Left colon (tissue), 2 donors: ENCODE measurements at regions of chr2 and their contacts with region 1.

Region 1: GRCh38 chr2:113965644-113966043 is 75.8 kb downstream of the ACTR3 start:
- DNase-seq: peak in 1 of 2 donors; percentile 20
- ATAC-seq: peak; percentile 64

Region 2: DNA sequence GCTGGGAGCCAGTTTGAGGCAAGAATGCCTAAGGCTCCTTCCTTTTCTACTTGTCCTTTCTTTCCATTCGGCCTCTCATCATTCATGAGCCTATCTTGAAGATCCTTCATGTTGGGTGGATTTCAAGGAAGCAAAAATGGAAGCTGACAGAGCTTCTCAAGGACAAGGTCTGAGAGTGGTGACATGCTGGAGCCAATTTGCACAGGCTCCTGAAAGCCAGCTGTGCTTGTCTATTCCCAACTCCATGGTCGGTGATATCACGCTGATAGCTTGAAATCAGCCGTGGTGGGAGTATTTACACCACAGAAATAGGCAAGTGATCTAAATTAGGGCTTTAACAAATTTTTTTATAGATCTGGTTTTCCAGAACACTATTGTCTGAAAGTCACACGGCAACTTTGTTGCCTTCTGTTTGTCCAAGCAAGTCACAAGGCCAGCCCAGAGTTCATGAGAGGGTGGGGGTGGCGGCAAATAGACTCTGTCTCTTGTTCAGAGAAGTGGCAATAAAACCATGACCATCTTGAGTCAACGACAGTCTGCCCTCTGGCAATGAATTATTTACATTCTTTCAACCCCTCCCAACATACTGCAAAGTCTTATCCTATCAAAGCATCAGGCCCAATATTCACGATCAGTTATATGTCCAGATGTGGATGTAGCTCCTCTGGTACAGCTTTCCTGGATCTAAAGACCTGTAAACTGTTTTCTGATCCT is 159.3 kb before region 1 on chr2:
- intact Hi-C with region 1: no loop called
- DNase-seq: peak; percentile 76 to 83
- ATAC-seq: peak; percentile 99

Region 3: GRCh38 chr2:114068438-114068837 is 102.8 kb after region 1 on chr2:
- intact Hi-C with region 1: no loop called
- DNase-seq: no peak
- ATAC-seq: no peak

Region 4: DNA sequence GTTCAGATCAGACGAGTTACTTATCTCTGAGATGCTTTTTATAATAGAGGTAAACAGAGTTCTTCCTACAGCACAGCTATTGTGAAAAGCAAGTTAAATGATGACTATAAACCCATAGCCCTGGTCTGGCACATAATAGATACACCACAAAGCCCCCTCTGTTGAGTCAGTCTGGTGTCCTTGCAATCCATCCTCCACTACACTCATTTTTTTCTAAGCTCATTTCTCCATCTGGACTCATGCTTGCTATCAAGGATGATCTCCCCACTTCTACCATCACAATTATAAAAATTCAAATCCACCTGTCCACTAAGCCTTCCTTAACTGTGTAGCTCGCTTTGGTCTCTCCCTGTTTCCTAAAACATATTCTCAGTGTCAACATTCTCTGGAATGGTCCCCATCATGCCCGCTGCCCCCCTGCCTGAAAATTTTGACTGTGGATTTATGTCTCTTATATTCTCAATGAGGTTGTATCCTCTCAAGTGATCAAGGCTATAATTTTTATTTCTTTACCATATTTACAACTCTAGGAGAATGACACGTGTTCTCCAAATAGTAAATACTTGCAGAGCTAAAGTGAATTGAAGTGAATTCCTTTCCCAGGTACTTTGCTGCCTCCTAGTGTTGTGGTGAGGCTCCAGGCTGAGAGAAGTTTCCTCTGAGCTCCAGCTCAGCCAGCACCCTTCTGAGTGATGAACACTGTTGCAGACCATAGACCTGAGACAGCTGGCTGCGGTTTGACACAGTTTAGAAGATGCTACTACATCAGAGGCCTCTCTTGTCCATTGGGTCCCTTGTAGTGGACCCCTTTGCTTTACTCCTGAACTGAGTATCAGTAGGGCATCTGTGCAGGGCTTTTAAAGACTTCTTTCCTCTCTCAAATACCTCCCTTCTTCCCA is 585.5 kb after region 1 on chr2:
- intact Hi-C with region 1: loop called in 1 of 2 experiments (anchors 10 kb)
- DNase-seq: peak; percentile 49 to 70
- ATAC-seq: peak; percentile 78